ENCODE measurements at regions of chr5 and their contacts with region 1.

Region 1: DNA sequence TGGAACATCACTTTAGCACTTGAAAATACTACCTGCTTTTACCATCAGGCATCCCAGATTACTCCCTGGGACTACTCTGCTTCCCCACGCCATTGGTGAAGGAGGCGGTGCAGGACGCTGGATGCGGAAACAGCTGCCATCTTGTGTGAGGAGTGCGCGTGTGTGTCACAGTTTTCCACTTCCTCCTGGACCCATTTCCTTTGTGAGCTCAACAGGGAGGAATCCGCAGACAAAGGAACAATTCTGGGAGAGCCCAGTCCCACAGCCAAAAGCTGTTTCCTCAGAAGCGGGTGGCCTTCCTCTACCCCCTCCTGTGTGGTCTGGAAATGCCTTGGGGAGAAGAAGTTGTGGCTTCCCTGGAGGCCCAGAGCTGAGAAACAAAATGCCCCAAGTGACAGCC is 16.8 kb downstream of the AFAP1L1 start:
- DNase-seq: no peak

Region 2: DNA sequence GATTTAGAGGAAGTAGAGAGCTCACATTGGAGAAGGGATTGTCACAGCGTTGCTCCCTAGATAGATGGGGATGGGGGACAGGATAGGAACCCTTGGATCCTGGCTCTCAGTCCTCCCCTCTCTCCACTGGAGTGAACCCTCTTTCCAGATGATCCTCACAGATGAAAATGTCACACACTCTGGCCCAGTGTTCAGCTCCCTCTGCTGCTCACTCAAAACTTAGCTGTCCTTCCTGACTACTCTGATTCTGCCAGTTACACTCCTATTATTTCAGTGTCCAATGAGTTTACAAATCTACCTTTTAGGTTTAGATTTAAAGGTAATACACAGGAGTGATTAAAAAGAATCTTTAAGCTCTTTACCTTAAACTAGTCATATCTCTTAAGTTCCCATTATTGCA is 982.0 kb before region 1 on chr5:
- intact Hi-C with region 1: no loop called
- DNase-seq: no peak

Region 3: DNA sequence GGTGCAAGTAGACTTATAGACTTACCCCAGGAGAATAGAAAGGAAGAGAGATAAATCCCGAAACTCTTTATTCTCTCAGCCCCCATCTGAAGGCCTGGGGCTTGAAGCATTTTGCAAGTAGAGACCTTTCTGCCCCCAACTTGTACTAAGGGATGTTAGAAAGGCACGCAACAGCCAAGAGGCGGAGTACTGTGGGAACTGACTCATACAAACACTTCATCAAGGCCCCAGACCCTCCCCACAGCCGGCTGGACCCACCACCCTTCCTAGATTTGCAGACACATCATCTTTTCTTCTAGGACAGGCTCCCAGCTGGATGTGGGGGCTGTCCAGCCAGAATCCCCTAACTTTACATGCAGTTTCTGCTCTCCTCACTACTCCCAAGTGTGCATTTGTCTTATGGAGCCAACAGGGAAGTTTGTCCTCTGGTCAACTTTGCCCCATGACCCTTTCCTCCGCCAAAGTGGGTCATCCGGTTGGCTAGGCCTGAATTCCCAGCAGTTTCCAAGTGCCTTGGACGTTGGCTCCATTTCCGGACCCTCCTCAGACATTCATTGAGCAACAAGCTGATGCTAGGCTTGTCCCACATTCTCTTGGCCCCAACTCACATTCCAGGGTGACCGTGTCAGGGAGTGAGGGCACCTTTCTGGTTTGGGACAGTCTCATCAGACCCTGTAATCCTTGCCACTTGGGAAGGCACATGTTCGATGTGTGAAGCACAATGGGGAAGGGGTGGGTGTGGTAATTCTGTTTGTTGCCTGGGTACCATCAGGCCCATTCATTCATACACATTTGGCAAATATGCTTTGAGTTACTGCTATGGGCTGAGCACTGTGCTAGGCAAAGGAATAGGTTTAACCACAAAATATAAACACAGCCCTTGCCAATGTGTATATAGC is 82.6 kb before region 1 on chr5:
- intact Hi-C with region 1: no loop called
- DNase-seq: peak; percentile 90

Region 4: DNA sequence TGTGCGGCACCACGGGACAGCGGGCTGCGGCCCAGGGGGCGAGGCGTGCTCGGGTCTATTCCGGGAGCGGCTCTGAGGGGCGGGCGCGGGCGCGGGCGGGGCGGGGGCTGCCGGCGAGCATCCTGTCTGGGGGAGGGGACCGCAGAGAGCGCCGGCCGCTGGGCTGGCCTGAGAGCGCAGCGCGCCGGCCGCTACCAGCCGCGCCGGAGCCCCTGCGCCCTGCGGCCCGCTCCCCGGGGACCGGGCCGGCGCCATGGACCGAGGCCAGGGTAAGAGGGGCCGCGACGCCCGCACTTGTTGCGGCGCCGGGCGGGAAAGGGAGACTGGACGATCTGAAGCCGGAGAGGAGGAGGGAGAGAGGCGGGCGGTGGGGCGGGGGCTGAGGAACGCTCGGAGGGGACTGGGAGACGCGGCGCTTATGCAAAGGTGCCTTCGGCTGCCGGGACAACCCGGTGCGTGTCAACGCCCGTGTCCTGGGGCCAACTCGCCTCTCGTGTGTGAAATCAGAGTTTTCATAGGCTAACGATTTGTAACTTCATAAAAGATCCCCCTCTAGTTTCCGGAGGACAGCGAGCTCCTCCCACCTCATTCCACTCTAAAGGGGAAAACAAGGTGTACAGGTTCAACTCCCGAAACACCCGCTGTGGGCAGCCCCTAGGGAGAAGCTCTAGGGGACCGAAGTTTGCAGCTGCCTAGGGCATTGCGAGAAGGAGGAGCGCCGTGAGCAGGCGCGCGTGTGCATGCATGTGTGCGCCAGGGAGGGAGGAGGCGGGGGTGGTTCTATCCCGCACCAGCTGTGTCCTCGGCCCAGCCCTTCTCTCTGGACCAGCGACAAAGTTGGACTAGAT is 16.5 kb before region 1 on chr5 and contains the start of gene AFAP1L1:
- intact Hi-C with region 1: loop called in 1 of 2 experiments (anchors 1 kb)
- DNase-seq: peak; percentile 89
- total RNA-seq, gene AFAP1L1: 17.9 to 30.3 TPM

Region 5: GRCh38 chr5:149317281-149318048 is 29.0 kb after region 1 on chr5:
- intact Hi-C with region 1: no loop called
- DNase-seq: no peak